PC-9 (cell line): ENCODE measurements at regions of chr1 and their contacts with region 1.

Region 1: GRCh38 chr1:163875200-163875926 is 553.6 kb downstream of the NUF2 start:
- DNase-seq: no peak
- H3K4me3 ChIP-seq: no peak overlapping the region
- H3K27ac ChIP-seq: no peak overlapping the region
- H3K4me1 ChIP-seq: no peaks in the 10 kb centered on the region
- H3K27me3 ChIP-seq: no peaks in the 10 kb centered on the region
- CTCF ChIP-seq: no peak

Region 2: DNA sequence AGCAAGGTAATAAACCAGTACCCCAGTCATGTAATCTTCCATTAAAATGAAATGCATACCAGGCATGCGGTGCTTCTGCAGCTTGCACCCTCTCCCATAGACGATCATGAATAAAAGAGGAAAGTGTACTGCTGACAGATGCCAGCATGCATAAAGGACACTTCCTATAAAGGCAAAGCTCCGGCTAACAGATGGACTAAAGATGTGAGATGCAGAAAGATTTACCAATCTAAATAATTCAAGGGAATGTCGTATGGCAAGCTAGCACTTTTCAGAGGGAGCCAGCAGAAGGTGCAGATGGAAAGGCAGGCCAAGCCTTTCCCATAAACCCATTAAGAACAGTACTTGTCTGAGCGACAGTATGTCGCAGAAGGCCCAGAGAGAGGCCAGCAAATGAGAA is 11.6 kb before region 1 on chr1:
- CTCF ChIA-PET with region 1: no interaction called
- POLR2A ChIA-PET with region 1: no interaction called
- intact Hi-C with region 1: loop called (anchors 2 kb)
- DNase-seq: no peak
- H3K4me3 ChIP-seq: no peak overlapping the region
- H3K27ac ChIP-seq: no peak overlapping the region
- H3K4me1 ChIP-seq: no peaks in the 10 kb centered on the region
- H3K27me3 ChIP-seq: no peaks in the 10 kb centered on the region
- CTCF ChIP-seq: no peak

Region 3: GRCh38 chr1:163897412-163898155 is 22.2 kb after region 1 on chr1:
- CTCF ChIA-PET with region 1: no interaction called
- POLR2A ChIA-PET with region 1: no interaction called
- intact Hi-C with region 1: no loop called
- DNase-seq: no peak
- H3K4me3 ChIP-seq: no peak overlapping the region
- H3K27ac ChIP-seq: no peak overlapping the region
- H3K4me1 ChIP-seq: no peaks in the 10 kb centered on the region
- H3K27me3 ChIP-seq: no peaks in the 10 kb centered on the region
- CTCF ChIP-seq: no peak